GM13976 (cell line): ENCODE measurements at regions of chr11 and their contacts with region 1.

Region 1: GRCh38 chr11:2532704-2533586 is 88.1 kb downstream of the KCNQ1 start:
- DNase-seq: peak; percentile 91
- CTCF ChIP-seq: peak; percentile 99

Region 2: DNA sequence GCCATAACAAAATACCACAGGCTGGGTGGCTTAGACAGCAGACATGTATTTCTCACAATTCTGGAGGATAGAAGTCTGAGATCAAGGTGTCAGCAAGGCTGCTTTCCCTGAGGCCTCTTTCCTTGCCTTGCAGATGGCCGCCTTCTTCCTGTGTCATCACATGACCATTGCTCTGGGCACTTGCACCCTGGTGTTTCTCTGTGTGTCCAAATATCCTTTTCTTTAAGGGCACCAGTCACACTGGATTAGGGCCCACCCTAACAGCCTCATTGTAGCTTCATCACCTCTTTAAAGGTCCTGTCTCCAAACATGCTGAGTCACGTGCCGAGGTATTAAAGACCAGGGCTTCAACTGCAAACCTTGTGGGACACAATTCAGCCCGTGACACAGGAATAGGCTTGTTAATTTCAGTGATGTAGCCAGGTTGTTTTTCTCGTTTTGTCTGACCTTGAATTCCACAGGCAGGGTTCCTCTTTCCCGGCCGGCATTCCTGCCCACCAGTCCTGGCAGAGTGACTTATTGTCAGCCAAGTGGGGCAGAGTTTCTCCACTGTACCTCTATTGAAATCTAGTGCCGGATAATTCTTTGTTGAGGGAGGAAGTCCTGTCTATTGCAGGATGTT is 66.7 kb after region 1 on chr11:
- in situ Hi-C with region 1: no loop called
- DNase-seq: no peak
- CTCF ChIP-seq: no peak

Region 3: GRCh38 chr11:2708151-2708581 is 175.2 kb after region 1 on chr11:
- in situ Hi-C with region 1: no loop called
- DNase-seq: no peak
- CTCF ChIP-seq: no peak

Region 4: GRCh38 chr11:2892215-2893020 is 359.5 kb after region 1 on chr11:
- in situ Hi-C with region 1: loop called (anchors 10 kb)
- DNase-seq: peak; percentile 85
- CTCF ChIP-seq: peak; percentile 89

Region 5: DNA sequence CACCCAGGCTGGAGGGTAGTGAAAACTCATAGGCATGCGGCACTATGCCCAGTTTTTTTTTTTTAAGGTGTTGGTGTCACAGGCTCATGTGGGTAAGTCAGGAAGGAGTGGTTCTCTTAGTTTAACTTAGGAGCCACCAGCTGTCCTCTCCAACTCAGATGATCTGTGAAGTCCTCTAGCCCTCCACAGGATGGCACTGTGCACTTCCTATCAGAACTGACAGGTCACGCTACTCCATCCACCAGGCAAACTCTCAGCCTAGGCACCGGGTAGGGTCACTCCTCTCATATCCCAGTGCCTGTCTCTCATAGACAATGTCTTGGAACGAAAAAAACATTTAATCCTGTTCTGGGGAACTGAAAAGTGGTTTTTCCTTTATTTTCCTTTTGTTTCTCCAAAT is 442.6 kb after region 1 on chr11:
- in situ Hi-C with region 1: no loop called
- DNase-seq: peak; percentile 43
- CTCF ChIP-seq: peak; percentile 48